H1 (cell line): ENCODE measurements at regions of chr1 and their contacts with region 1.

Region 1: GRCh38 chr1:63917571-63918417 is 144.0 kb downstream of the ROR1 start:
- DNase-seq: peak; percentile 36 to 86
- H3K4me3 ChIP-seq: no peak overlapping the region
- H3K27ac ChIP-seq: no peak overlapping the region
- H3K4me1 ChIP-seq: peaks cover 11 to 42% (median 27%) of the 10 kb centered on the region in 4 experiments; a peak in 6 of 7 replicates
- H3K27me3 ChIP-seq: no peaks in the 10 kb centered on the region
- CTCF ChIP-seq: peak; percentile 62 to 86 (median 81)
- EP300 ChIP-seq: no peak
- POLR2A ChIP-seq: no peak
- RAD21 ChIP-seq: peak; percentile 52 to 66

Region 2: GRCh38 chr1:63622849-63623566 is 294.8 kb before region 1 on chr1:
- CTCF ChIA-PET with region 1: no interaction called
- POLR2A ChIA-PET with region 1: no interaction called
- DNase-seq: no peak
- H3K4me3 ChIP-seq: no peak overlapping the region
- H3K27ac ChIP-seq: no peak overlapping the region
- H3K4me1 ChIP-seq: peaks cover 0 to 3% (median 0%) of the 10 kb centered on the region in 4 experiments; a peak in 2 of 7 replicates
- H3K27me3 ChIP-seq: no peaks in the 10 kb centered on the region
- CTCF ChIP-seq: no peak
- EP300 ChIP-seq: no peak
- POLR2A ChIP-seq: no peak
- RAD21 ChIP-seq: peak; percentile 6 to 37; a peak in 1 of 4 replicates

Region 3: DNA sequence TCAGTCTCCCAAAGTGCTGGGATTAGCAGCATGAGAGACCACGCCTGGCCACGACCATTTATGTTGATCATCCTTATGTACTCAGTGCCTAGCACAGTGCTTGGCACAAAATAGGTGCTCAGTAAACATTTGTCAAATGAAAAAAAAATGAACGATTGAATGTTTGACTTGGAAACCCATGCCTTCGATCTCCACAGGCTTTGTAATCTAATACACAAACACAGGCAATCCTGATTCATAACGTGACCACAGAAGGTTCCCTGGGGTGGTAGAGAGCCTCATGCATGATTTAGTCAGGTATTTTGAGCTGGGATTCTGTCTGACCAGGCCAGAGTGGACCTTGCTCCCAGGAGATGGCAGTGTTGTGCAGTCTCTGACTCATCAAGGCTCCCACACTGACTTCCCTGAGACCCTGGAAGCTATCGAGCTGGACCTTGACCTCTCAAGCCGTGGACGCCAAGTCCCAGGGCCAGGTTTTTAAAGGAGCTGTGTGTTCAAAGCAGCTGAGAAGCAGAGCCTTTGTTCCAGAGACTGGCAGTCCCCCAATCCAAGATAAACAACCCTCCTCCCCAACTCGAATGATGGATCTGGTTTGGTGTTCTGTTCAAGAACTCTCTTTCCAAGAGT is 243.4 kb before region 1 on chr1:
- CTCF ChIA-PET with region 1: interaction called, 19 read pairs
- POLR2A ChIA-PET with region 1: no interaction called
- DNase-seq: peak; percentile 54 to 79
- H3K4me3 ChIP-seq: no peak overlapping the region
- H3K27ac ChIP-seq: no peak overlapping the region
- H3K4me1 ChIP-seq: peaks cover 0 to 3% (median 0%) of the 10 kb centered on the region in 4 experiments; a peak in 2 of 7 replicates
- H3K27me3 ChIP-seq: 0 out of 7 replicates have a peak, but pooled peaks cover 0 to 2% (median 0%) of the 10 kb centered on the region in 4 experiments
- CTCF ChIP-seq: peak; percentile 83 to 96 (median 88)
- EP300 ChIP-seq: no peak
- POLR2A ChIP-seq: no peak
- RAD21 ChIP-seq: peak; percentile 97 to 98

Region 4: GRCh38 chr1:63779338-63780211 is 138.2 kb before region 1 on chr1:
- CTCF ChIA-PET with region 1: interaction called, 22 read pairs
- POLR2A ChIA-PET with region 1: interaction called, 13 read pairs
- DNase-seq: no peak
- H3K4me3 ChIP-seq: peak overlapping the region in 3 of 4 experiments; percentile 16 to 31 (median 19); a peak in 3 of 8 replicates
- H3K27ac ChIP-seq: peak overlapping the region; percentile 53; the same call in 1 of the 2 replicates
- H3K4me1 ChIP-seq: peaks cover 30 to 74% (median 51%) of the 10 kb centered on the region in 4 experiments; a peak in 6 of 7 replicates
- H3K27me3 ChIP-seq: no peaks in the 10 kb centered on the region
- CTCF ChIP-seq: no peak
- EP300 ChIP-seq: no peak
- POLR2A ChIP-seq: no peak
- RAD21 ChIP-seq: no peak

Region 5: GRCh38 chr1:63902844-63903589 is 14.8 kb before region 1 on chr1:
- CTCF ChIA-PET with region 1: interaction called, 74 read pairs
- POLR2A ChIA-PET with region 1: interaction called, 7 read pairs
- DNase-seq: no peak
- H3K4me3 ChIP-seq: no peak overlapping the region
- H3K27ac ChIP-seq: no peak overlapping the region
- H3K4me1 ChIP-seq: peaks cover 1 to 23% (median 18%) of the 10 kb centered on the region in 4 experiments; a peak in 5 of 7 replicates
- H3K27me3 ChIP-seq: no peaks in the 10 kb centered on the region
- CTCF ChIP-seq: no peak
- EP300 ChIP-seq: no peak
- POLR2A ChIP-seq: no peak
- RAD21 ChIP-seq: no peak

Region 6: GRCh38 chr1:63935143-63935542 is 17.3 kb after region 1 on chr1:
- CTCF ChIA-PET with region 1: interaction called, 34 read pairs
- POLR2A ChIA-PET with region 1: interaction called, 6 read pairs
- DNase-seq: no peak
- H3K4me3 ChIP-seq: no peak overlapping the region
- H3K27ac ChIP-seq: no peak overlapping the region
- H3K4me1 ChIP-seq: peaks cover 0 to 4% (median 0%) of the 10 kb centered on the region in 4 experiments; a peak in 1 of 7 replicates
- H3K27me3 ChIP-seq: no peaks in the 10 kb centered on the region
- CTCF ChIP-seq: peak; percentile 6 to 20 (median 11); a peak in 3 of 4 replicates
- EP300 ChIP-seq: no peak
- POLR2A ChIP-seq: no peak
- RAD21 ChIP-seq: peak; percentile 14 to 28; a peak in 2 of 4 replicates

Region 7: GRCh38 chr1:63984257-63984929 is 66.6 kb after region 1 on chr1:
- CTCF ChIA-PET with region 1: no interaction called
- POLR2A ChIA-PET with region 1: no interaction called
- DNase-seq: no peak
- H3K4me3 ChIP-seq: no peak overlapping the region
- H3K27ac ChIP-seq: no peak overlapping the region
- H3K4me1 ChIP-seq: peaks cover 0 to 5% (median 2%) of the 10 kb centered on the region in 4 experiments; a peak in 2 of 7 replicates
- H3K27me3 ChIP-seq: no peaks in the 10 kb centered on the region
- CTCF ChIP-seq: no peak
- EP300 ChIP-seq: no peak
- POLR2A ChIP-seq: no peak
- RAD21 ChIP-seq: no peak